ENCODE measurements at regions of chr20 and their contacts with region 1.

Region 1: GRCh38 chr20:62616728-62617621 is 25.3 kb upstream of the SLCO4A1 start:
- DNase-seq: peak; percentile 76 to 78 (median 77)
- H3K4me3 ChIP-seq: peak overlapping the region in 2 of 7 experiments; percentile 7 to 26
- H3K27ac ChIP-seq: peak overlapping the region in 1 of 2 experiments; percentile 82
- H3K4me1 ChIP-seq: peaks cover 0 to 56% (median 45%) of the 10 kb centered on the region in 4 experiments
- H3K27me3 ChIP-seq: no peaks in the 10 kb centered on the region

Region 2: GRCh38 chr20:62449951-62450691 is 166.9 kb before region 1 on chr20:
- CTCF ChIA-PET with region 1: no interaction called
- POLR2A ChIA-PET with region 1: no interaction called
- DNase-seq: peak in 1 of 3 donors; percentile 5
- H3K4me3 ChIP-seq: no peak overlapping the region
- H3K27ac ChIP-seq: no peak overlapping the region
- H3K4me1 ChIP-seq: no peaks in the 10 kb centered on the region
- H3K27me3 ChIP-seq: peaks cover 0 to 41% (median 14%) of the 10 kb centered on the region in 5 experiments

Region 3: GRCh38 chr20:62500237-62500864 is 116.6 kb before region 1 on chr20:
- CTCF ChIA-PET with region 1: interaction called, 47 read pairs
- POLR2A ChIA-PET with region 1: interaction called, 6 read pairs
- DNase-seq: peak; percentile 67 to 80 (median 77)
- H3K4me3 ChIP-seq: no peak overlapping the region
- H3K27ac ChIP-seq: no peak overlapping the region
- H3K4me1 ChIP-seq: peaks cover 0 to 33% (median 21%) of the 10 kb centered on the region in 4 experiments
- H3K27me3 ChIP-seq: peaks cover 0 to 5% (median 0%) of the 10 kb centered on the region in 5 experiments

Region 4: GRCh38 chr20:62576815-62577506 is 40.0 kb before region 1 on chr20:
- CTCF ChIA-PET with region 1: interaction called, 11 read pairs
- POLR2A ChIA-PET with region 1: interaction called, 4 read pairs
- DNase-seq: peak in 2 of 3 donors; percentile 59 to 65
- H3K4me3 ChIP-seq: no peak overlapping the region
- H3K27ac ChIP-seq: no peak overlapping the region
- H3K4me1 ChIP-seq: peaks cover 0 to 5% (median 2%) of the 10 kb centered on the region in 4 experiments
- H3K27me3 ChIP-seq: peaks cover 0 to 91% (median 6%) of the 10 kb centered on the region in 5 experiments

Region 5: DNA sequence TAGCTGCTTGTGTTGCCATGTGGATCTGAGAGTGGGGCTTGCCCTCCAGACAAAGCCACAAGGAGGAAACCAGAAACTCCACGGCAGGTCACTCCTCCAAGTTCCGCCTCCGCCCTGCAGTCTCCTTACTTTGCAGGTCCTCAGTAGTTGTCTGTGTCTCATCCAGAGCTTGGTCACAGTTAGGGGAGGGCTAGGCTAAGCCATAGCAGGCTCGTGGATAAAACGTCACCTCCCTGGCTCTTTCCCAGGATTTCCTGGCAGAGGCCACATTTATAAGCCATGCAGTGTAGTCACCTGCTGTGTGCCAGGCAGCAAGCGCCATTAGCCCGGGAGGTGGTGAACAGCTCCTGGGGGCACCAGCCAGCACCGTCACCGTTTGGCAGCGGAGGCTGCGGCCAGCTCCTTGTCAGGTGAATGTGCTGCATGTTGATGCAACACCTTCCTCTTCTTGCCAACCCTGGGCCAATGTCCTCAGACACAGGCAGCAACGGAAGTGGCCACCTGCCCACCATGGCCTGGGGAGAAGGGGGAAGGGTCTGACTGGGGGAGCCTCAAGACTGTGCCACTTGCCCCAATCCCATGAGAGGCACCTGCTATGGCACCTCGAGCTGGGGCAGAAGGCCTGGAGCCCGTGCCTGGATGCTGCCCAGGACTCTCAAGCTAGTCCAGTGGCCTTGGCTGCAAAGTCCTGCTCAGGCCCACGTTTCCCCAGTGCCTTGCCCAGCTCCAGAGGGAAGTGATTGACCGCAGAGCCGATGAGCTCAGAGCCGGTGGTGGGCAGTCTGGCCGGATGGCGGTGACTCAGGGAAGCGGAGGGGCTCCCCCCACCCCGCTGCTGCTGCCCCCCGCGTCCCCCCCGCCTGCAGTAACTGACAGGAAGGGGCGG is 13.7 kb before region 1 on chr20:
- CTCF ChIA-PET with region 1: interaction called, 31 read pairs
- POLR2A ChIA-PET with region 1: interaction called, 30 read pairs
- DNase-seq: peak; percentile 79 to 96 (median 94)
- H3K4me3 ChIP-seq: peak overlapping the region; percentile 4 to 72 (median 42)
- H3K27ac ChIP-seq: peak overlapping the region in 1 of 2 experiments; percentile 71
- H3K4me1 ChIP-seq: peaks cover 4 to 77% (median 66%) of the 10 kb centered on the region in 4 experiments
- H3K27me3 ChIP-seq: no peaks in the 10 kb centered on the region

Region 6: DNA sequence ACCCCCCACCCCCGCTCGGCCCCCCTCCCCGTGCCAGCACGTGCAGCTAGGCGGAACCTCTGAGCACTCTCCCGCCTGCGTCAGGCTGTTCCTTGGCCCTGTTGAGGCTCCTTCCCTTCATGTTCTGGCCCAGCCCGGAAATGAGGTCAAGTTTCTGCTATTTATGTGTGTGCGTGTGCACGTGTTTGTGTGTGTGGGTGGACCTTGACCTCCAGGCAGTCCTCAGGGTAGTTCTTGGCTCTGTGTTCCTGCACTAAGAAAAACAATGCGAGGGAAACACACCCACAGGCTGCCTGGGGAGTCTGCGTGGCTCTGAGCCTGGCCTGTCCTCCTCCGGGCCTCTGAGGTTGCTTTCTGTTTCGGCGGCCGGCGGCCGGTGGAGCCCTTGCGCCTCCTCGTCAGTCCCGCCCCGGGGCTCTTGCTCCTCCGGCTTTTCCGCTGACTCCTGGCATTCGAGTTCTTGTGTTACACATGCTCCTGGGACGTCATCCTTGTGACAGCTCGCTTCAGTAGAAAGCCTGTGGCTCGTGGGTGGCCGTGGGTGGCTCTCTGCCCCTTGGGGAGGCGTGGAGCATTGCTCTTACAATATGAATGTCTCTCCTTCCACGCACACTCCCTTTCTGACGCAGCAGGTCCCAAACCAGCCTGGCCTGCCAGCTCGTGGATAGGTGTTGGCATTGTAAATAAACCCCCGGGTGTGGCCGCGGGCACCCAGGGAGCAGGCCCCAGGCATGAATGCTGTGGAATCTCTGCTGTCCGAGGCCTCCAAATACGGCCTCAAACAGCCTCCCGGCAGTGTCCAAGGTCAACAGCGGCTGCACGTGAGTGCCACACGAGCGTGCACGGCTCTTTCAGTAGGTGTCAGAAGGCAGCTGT is 35.3 kb after region 1 on chr20:
- CTCF ChIA-PET with region 1: interaction called, 23 read pairs
- POLR2A ChIA-PET with region 1: interaction called, 16 read pairs
- DNase-seq: peak; percentile 52 to 72 (median 70)
- H3K4me3 ChIP-seq: peak overlapping the region in 5 of 7 experiments; percentile 12 to 64 (median 29)
- H3K27ac ChIP-seq: peak overlapping the region in 1 of 2 experiments; percentile 66
- H3K4me1 ChIP-seq: peaks cover 3 to 62% (median 32%) of the 10 kb centered on the region in 4 experiments
- H3K27me3 ChIP-seq: no peaks in the 10 kb centered on the region

Measured in common myeloid progenitor, CD34-positive (primary cell).